Cardiac septum (tissue), 1 donor: ENCODE measurements at regions of chr14 and their contacts with region 1.

Region 1: GRCh38 chr14:67704484-67705089 is 2.9 kb downstream of the RDH12 start:
- DNase-seq: no peak

Region 2: GRCh38 chr14:67426983-67427606 is 277.5 kb before region 1 on chr14:
- intact Hi-C with region 1: loop called (anchors 10 kb)
- DNase-seq: no peak

Region 3: DNA sequence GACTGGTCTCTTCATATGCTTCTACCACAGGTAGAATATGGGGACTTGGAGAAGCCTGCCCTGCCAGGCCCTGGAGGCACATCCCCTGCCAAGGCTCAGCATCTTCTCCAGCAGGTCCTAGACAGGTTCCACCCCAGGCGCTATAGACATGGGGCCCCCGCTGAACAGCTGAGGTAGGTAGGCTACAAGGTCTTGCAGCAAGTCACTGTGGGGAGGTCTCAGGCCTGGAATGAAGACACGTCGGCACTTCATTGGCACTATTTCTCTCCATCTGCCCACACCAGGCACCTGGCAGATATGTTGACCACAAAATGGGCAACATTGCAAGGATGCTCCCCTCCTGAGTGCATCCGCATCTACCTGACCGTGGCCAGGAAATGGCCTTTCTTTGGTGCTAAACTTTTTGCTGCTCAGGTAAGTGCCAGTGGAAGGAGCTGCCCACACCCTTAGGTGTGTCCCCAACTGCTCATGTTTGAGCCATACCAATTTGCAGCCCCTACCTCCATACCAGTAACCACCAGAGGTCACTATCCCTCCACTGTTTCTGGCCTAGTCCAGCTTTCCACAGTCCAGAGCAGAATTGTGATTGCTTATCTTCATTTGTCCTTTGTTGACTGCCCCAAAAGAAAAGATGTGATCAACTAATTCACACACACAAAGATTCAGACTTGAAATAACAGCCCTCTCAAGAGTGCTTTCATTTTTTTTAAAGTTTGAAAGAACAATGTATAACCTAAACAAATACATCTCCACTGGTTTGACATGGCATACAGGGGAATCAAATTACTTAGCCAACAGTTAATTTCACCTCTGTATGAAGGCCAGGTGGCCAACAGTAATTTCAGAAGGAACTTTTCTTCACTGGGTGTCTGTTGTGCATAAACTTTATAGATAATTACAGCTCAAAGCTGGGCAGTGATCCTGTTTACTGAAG is 120.6 kb before region 1 on chr14:
- intact Hi-C with region 1: loop called (anchors 5 kb)
- DNase-seq: no peak

Region 4: DNA sequence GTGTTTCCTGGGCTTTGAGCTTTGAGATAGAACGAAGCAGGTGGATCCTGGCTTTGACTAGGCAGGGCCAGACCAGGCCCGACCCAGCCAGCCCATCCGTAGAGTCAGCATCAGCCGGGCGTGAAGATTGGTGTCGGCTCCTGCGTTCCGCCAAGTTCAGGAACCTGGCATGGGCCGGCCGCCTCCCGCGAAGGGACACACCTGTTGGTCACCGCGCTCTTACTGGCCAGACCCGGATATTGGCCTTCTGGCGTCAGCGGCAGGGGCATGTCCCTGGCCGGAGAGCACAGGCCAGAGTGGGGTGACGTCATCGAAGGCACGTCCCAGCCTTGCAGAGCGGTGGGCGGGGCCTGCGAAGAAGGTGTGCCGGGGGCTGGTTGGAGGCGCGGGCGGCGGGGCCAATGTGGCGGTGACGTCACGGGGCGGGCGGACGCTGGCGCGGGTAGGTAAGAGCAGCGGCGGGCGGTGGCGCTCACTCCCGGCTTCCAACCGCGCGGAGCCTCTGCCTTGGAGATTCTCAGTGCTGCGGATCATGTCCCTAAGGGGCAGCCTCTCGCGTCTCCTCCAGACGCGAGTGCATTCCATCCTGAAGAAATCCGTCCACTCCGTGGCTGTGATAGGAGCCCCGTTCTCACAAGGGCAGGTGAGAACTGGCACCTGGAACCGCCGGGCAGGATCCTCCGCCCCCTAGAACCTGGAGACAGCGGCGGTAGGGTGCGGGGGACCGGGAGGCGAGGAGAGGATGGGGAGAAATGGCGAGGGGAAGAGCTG is 85.0 kb before region 1 on chr14 and contains the start of gene ARG2:
- intact Hi-C with region 1: loop called (anchors 2 kb)
- DNase-seq: peak; percentile 99
- total RNA-seq, gene ARG2: 1.6 TPM

Region 5: GRCh38 chr14:67963960-67964744 is 259.6 kb after region 1 on chr14:
- intact Hi-C with region 1: no loop called
- DNase-seq: no peak